Left colon (tissue), 2 donors: ENCODE measurements at regions of chr2 and their contacts with region 1.

Region 1: DNA sequence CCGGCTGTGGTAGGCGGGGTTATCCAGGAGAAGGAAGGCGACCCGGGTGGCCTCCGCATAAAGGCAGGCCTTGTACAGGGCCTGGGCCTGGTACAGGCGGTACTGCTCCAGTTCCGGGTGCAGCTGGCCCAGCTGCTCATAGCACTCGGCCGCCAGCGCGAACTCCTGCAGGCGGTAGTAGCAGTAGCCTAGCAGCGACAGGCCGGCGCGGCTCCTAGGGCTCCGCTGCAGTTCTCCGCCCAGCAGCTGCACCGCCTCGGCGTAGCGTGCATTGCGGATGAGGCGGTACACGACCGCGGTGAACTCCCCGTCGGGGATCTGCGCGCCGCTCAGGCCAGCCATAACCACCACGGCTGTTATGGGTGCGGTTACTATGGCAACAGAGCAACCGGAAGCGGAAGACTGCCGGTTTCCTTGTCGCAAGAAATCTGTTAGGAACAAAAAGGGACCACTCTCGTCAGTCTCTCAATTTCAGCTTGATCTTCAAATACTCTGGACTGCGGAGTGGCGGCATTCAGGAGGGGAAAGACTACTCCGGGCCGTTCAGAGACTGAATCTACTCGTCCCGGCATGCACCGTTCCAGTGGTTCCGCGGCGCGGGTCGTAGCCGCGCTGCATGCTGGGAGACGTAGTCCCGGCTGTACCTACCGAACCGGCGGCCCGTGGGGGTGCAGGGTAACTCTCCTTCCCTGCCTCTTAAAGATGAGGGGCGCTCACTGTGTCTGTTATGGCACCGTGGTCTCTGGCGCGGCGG is 160.0 kb downstream of the AGPS start:
- DNase-seq: peak; percentile 90 to 92
- ATAC-seq: peak; percentile 95

Region 2: GRCh38 chr2:176096986-176097819 is 1455.4 kb before region 1 on chr2:
- intact Hi-C with region 1: no loop called
- DNase-seq: peak; percentile 59 to 77
- ATAC-seq: peak; percentile 94

Region 3: GRCh38 chr2:177618255-177619253 is 66.0 kb after region 1 on chr2:
- intact Hi-C with region 1: loop called in 1 of 2 experiments (anchors 10 kb)
- DNase-seq: peak; percentile 92 to 97
- ATAC-seq: peak; percentile 97